Activated CD8-positive, alpha-beta T cell treated with anti-CD3 and anti-CD28 coated beads for 36 hours (primary cell): ENCODE measurements at regions of chr13 and their contacts with region 1.

Region 1: DNA sequence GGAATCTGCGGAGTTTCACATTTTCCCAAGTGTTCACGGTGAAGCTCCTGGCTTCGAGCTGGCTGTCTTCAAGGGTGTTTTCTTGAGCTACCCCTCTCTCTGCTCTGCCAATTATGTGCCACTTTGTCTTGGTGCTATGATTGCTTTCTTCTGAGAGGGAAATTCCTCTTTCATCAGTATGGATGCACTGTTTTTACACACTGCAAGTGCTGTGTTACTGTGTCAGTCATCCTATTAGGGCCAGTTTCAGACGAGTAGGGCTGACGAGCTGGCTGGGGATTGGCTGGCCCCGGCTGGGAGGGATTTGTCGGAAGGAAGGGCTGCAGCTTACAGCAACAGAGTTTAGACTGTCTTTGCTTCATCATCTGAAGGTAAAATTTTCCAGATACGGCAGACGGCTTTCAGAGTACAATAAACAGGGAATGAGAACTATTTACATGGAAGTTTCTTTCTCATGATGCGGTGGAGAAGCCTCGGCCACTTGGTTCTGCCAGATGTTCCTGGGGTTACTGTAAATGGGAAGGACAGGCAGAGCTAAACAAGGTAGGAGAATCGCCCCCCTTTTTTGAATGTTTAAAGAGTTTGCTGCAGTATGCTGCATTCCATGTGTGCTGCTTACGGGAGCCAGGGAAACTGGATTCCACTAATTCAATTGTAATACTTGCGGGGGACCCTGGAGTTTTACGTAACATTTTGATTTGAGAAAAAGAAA is at the start of gene MBNL2:
- DNase-seq: peak; percentile 92
- ATAC-seq: peak; percentile 95
- H3K4me3 Mint-ChIP-seq: peak within 1 kb of the TSS; percentile 79
- H3K27ac Mint-ChIP-seq: peak within 1 kb of the TSS; percentile 92
- H3K4me1 Mint-ChIP-seq: peaks cover 29% of the 10 kb centered on the region
- H3K27me3 Mint-ChIP-seq: no peaks in the 10 kb centered on the region
- CTCF ChIP-seq: no peak
- total RNA-seq, gene MBNL2: 15.8 to 16.1 TPM

Region 2: DNA sequence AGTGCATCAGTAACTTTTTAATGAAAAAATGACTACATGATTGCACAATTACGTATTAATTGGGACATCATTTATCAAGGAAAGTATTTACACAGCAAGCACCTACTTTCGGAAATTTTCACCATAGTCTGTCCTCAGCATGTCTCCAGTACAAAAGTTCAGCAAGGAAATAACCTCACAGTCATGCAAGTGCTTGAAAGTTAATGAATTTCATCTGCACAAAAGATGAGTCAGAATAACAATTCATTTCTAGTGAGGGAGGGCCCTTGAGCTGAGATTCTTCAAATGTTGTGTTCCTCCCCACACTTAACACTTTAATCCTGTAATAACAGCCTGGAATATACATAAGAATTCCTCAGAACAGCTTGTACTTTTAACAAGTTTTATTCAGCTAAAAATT is 178.8 kb before region 1 on chr13:
- CTCF ChIA-PET with region 1: no interaction called
- POLR2A ChIA-PET with region 1: no interaction called
- intact Hi-C with region 1: no loop called
- DNase-seq: no peak
- ATAC-seq: no peak
- H3K4me3 Mint-ChIP-seq: no peak overlapping the region
- H3K27ac Mint-ChIP-seq: no peak overlapping the region
- H3K4me1 Mint-ChIP-seq: no peaks in the 10 kb centered on the region
- H3K27me3 Mint-ChIP-seq: peaks cover 5% of the 10 kb centered on the region
- CTCF ChIP-seq: no peak

Region 3: GRCh38 chr13:97124916-97125809 is 97.0 kb before region 1 on chr13:
- CTCF ChIA-PET with region 1: no interaction called
- POLR2A ChIA-PET with region 1: interaction called, 3 read pairs
- intact Hi-C with region 1: loop called (anchors 10 kb)
- DNase-seq: peak; percentile 16
- ATAC-seq: peak; percentile 29
- H3K4me3 Mint-ChIP-seq: no peak overlapping the region
- H3K27ac Mint-ChIP-seq: no peak overlapping the region
- H3K4me1 Mint-ChIP-seq: peaks cover 21% of the 10 kb centered on the region
- H3K27me3 Mint-ChIP-seq: peaks cover 26% of the 10 kb centered on the region
- CTCF ChIP-seq: no peak

Region 4: DNA sequence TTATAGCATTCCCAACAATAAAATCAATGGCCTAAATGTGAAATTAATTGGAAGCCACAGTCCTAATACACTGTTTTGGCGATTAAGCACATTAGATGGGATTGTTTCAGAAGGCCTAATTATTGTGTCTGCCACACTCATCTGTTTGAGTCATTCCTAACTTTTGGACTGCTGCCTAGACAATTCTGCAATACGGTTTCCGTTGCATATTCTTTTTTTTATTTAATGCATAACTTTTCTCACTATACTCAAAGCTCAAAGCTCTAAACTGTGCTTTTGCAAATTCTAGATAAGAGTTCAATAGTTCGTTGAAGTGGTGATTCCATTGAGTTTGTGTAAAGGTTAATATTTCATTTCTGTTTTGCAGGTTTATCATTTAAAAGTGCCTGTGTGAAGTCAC is 53.1 kb after region 1 on chr13:
- CTCF ChIA-PET with region 1: no interaction called
- POLR2A ChIA-PET with region 1: no interaction called
- intact Hi-C with region 1: no loop called
- DNase-seq: no peak
- ATAC-seq: no peak
- H3K4me3 Mint-ChIP-seq: no peak overlapping the region
- H3K27ac Mint-ChIP-seq: no peak overlapping the region
- H3K4me1 Mint-ChIP-seq: peaks cover 44% of the 10 kb centered on the region
- H3K27me3 Mint-ChIP-seq: no peaks in the 10 kb centered on the region
- CTCF ChIP-seq: no peak

Region 5: DNA sequence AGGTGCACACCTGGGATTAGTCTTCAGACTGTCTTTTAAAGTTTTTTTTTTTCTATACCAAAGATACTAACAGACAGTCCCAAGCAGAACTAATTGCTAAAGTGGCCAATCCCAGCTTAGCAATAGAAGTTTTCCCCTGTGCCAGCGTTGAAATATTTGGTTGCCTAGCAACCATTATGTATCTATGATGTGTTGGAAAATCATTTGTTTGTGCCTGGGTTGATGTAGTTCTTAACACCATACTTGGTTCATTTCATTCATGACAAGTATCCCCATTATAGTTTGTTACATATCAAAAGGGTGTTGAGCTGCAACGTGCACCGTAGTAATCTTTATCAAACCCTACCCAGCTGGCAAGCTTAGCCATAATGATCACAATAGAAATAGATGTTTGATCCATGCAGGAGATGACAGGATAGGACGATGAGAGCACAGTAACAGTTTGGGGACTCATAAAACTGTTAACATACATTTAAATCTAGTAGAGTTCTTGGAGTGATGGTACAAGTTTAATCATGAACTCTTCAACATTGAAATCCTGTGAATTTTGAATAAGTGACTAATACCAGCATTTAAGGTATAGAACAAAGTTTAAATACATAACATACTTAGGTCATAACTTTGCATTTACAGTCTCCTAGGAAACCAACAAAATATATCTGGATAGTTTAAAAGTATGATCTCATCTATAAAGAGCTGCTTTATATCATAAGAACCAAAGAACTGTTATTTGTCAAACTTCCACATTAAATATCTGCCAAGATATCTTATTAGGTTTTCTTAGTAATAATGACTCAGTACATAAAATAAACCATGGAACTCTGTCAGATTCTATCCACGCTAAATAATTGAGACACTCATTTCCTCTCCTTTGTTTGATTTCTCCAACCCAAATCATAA is 73.4 kb after region 1 on chr13:
- CTCF ChIA-PET with region 1: no interaction called
- POLR2A ChIA-PET with region 1: no interaction called
- intact Hi-C with region 1: loop called (anchors 10 kb)
- DNase-seq: no peak
- ATAC-seq: no peak
- H3K4me3 Mint-ChIP-seq: no peak overlapping the region
- H3K27ac Mint-ChIP-seq: no peak overlapping the region
- H3K4me1 Mint-ChIP-seq: peaks cover 34% of the 10 kb centered on the region
- H3K27me3 Mint-ChIP-seq: no peaks in the 10 kb centered on the region
- CTCF ChIP-seq: no peak

Region 6: DNA sequence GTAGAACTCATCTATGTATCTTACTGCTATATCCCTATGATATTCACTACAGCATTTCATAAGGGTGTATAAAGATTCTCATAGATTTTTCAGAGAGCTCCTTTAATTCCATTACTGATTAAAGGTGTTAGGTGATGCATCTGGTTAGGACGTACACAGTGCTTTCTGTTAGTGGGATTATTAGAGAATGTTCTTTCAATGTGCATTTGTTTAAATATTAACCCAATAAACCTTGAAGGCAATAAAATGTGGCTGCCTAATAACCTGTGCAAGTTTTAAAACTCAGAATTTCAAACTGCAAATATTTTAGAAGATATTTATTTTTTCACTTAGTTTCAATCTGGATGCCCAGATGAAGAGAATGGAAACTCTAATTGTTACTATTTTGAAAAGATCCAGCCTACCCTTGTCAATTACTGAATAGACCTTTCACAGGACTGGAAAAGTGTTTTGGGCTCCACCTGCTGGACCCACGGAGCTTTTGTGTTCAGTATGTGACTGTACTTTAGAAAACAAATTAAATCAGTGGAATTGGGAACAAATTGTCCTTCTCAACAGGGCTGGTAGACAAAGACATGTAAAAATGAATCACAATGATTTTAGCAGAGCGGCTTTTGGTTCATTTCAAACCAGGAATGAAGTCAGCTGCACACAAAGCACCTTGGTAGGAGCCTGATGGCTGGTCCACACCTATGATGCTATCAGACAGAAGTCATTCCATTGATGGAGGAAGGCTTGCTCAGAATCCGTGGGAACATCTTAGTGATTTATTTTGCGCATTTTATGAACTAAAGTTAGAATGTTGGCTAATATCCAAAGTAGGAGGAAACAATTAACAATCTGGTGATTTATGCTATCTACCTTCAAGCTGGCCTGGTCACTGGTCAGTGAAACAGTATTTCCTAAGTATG is 122.4 kb after region 1 on chr13:
- CTCF ChIA-PET with region 1: interaction called, 6 read pairs
- POLR2A ChIA-PET with region 1: no interaction called
- intact Hi-C with region 1: loop called (anchors 5 kb)
- DNase-seq: peak; percentile 73
- ATAC-seq: peak; percentile 71
- H3K4me3 Mint-ChIP-seq: no peak overlapping the region
- H3K27ac Mint-ChIP-seq: no peak overlapping the region
- H3K4me1 Mint-ChIP-seq: peaks cover 8% of the 10 kb centered on the region
- H3K27me3 Mint-ChIP-seq: no peaks in the 10 kb centered on the region
- CTCF ChIP-seq: peak; percentile 70

Region 7: GRCh38 chr13:97359181-97360057 is 137.3 kb after region 1 on chr13:
- CTCF ChIA-PET with region 1: interaction called, 22 read pairs
- POLR2A ChIA-PET with region 1: interaction called, 4 read pairs
- intact Hi-C with region 1: no loop called
- DNase-seq: peak; percentile 63
- ATAC-seq: peak; percentile 97
- H3K4me3 Mint-ChIP-seq: no peak overlapping the region
- H3K27ac Mint-ChIP-seq: no peak overlapping the region
- H3K4me1 Mint-ChIP-seq: no peaks in the 10 kb centered on the region
- H3K27me3 Mint-ChIP-seq: no peaks in the 10 kb centered on the region
- CTCF ChIP-seq: peak; percentile 72

Region 8: DNA sequence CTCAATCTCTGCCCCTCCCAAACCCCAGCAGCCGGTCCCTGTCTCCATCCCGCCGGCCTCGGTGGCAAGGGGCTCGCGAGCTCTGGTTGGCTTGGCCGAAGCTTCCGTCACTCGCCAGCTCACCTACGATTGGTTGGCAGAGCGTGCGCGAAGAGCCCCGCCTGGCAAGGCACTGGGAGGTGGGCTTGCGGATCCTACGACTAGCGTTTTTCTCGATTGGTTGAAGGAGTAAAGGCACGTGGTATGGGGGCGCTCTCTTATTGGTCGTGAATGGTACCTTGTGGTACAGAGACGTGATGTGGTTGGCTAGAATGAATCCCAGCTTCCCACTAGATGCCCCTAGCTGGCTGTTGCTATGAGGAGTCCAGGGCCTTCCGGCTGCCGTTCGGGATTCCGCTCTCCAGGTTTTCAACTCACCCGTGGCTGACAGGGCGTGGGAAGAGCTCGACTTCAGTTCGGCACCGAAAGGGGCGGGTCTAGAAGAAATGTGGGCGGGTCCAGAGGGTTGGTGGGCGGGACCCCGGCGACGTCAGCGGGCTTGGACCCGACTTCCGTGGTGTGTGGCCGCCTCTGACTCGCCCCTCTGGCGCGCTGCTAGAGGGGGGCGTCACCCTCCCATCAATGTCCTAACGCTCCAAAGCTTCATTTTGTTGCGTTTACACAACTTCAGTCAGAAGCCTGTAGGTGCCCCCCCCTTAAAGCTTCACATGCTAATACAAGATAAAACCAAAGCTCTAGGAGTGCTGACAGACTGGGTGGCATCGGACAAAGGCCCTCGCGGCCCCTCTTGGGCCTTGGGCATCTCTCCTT is 211.0 kb after region 1 on chr13:
- CTCF ChIA-PET with region 1: interaction called, 4 read pairs
- POLR2A ChIA-PET with region 1: interaction called, 14 read pairs
- intact Hi-C with region 1: loop called (anchors 10 kb)
- DNase-seq: peak; percentile 98
- ATAC-seq: peak; percentile 81
- H3K4me3 Mint-ChIP-seq: peak overlapping the region; percentile 97
- H3K27ac Mint-ChIP-seq: peak overlapping the region; percentile 97
- H3K4me1 Mint-ChIP-seq: peaks cover 25% of the 10 kb centered on the region
- H3K27me3 Mint-ChIP-seq: peaks cover 1% of the 10 kb centered on the region
- CTCF ChIP-seq: no peak